Left lung (tissue), 14 donors: ENCODE measurements at regions of chr2 and their contacts with region 1.

Region 1: GRCh38 chr2:174603280-174603679 is 5.7 kb upstream of the WIPF1 start:
- DNase-seq: peak in 2 of 4 donors; percentile 44 to 53
- ATAC-seq: peak; percentile 79
- H3K4me3 ChIP-seq: no peak overlapping the region
- H3K27ac ChIP-seq: no peak overlapping the region
- H3K4me1 ChIP-seq: peaks cover 0 to 63% of the 10 kb centered on the region in 2 donors
- H3K27me3 ChIP-seq: no peaks in the 10 kb centered on the region
- CTCF ChIP-seq: peak in 1 of 2 donors; percentile 16

Region 2: GRCh38 chr2:174465327-174465726 is 138.0 kb before region 1 on chr2:
- intact Hi-C with region 1: loop called in 1 of 2 experiments (anchors 10 kb)
- DNase-seq: peak in 1 of 4 donors; percentile 11
- ATAC-seq: no peak
- H3K4me3 ChIP-seq: no peak overlapping the region
- H3K27ac ChIP-seq: no peak overlapping the region
- H3K4me1 ChIP-seq: no peaks in the 10 kb centered on the region
- H3K27me3 ChIP-seq: no peaks in the 10 kb centered on the region
- CTCF ChIP-seq: no peak

Region 3: GRCh38 chr2:174487108-174487819 is 116.0 kb before region 1 on chr2:
- intact Hi-C with region 1: no loop called
- DNase-seq: peak; percentile 94 to 100 (median 100)
- ATAC-seq: peak; percentile 99
- H3K4me3 ChIP-seq: peak overlapping the region; percentile 92 to 97
- H3K27ac ChIP-seq: peak overlapping the region; percentile 61 to 82
- H3K4me1 ChIP-seq: peaks cover 0 to 14% of the 10 kb centered on the region in 2 donors
- H3K27me3 ChIP-seq: no peaks in the 10 kb centered on the region
- CTCF ChIP-seq: no peak

Region 4: GRCh38 chr2:174682578-174683391 is 79.5 kb after region 1 on chr2:
- intact Hi-C with region 1: loop called in 1 of 2 experiments (anchors 10 kb)
- DNase-seq: peak; percentile 54 to 90 (median 66)
- ATAC-seq: peak; percentile 86
- H3K4me3 ChIP-seq: peak overlapping the region; percentile 86 to 90
- H3K27ac ChIP-seq: peak overlapping the region; percentile 79 to 83
- H3K4me1 ChIP-seq: peaks cover 0 to 33% of the 10 kb centered on the region in 2 donors
- H3K27me3 ChIP-seq: no peaks in the 10 kb centered on the region
- CTCF ChIP-seq: no peak

Region 5: GRCh38 chr2:175195012-175195411 is 591.7 kb after region 1 on chr2:
- intact Hi-C with region 1: no loop called
- DNase-seq: no peak
- ATAC-seq: no peak
- H3K4me3 ChIP-seq: no peak overlapping the region
- H3K27ac ChIP-seq: no peak overlapping the region
- H3K4me1 ChIP-seq: no peaks in the 10 kb centered on the region
- H3K27me3 ChIP-seq: no peaks in the 10 kb centered on the region
- CTCF ChIP-seq: no peak